Activated CD4-positive, alpha-beta T cell treated with anti-CD3 and anti-CD28 coated beads for 36 hours (primary cell): ENCODE measurements at regions of chr17 and their contacts with region 1.

Region 1: GRCh38 chr17:3893003-3893719 is at the start of gene CAMKK1:
- DNase-seq: peak; percentile 94
- ATAC-seq: peak; percentile 88
- H3K4me3 Mint-ChIP-seq: peak within 1 kb of the TSS; percentile 76
- H3K27ac Mint-ChIP-seq: peak within 1 kb of the TSS; percentile 77
- H3K4me1 Mint-ChIP-seq: peaks cover 36% of the 10 kb centered on the region
- H3K27me3 Mint-ChIP-seq: no peaks in the 10 kb centered on the region
- total RNA-seq, gene CAMKK1: 4.5 to 5.4 TPM

Region 2: GRCh38 chr17:3750926-3751325 is 142.2 kb before region 1 on chr17:
- CTCF ChIA-PET with region 1: no interaction called
- POLR2A ChIA-PET with region 1: no interaction called
- intact Hi-C with region 1: no loop called
- DNase-seq: peak; percentile 65
- ATAC-seq: peak; percentile 59
- H3K4me3 Mint-ChIP-seq: no peak overlapping the region
- H3K27ac Mint-ChIP-seq: peak overlapping the region; percentile 81
- H3K4me1 Mint-ChIP-seq: peaks cover 29% of the 10 kb centered on the region
- H3K27me3 Mint-ChIP-seq: no peaks in the 10 kb centered on the region

Region 3: GRCh38 chr17:3944485-3945388 is 51.6 kb after region 1 on chr17:
- CTCF ChIA-PET with region 1: no interaction called
- POLR2A ChIA-PET with region 1: no interaction called
- intact Hi-C with region 1: loop called in 1 of 2 experiments (anchors 1 kb)
- DNase-seq: peak; percentile 72
- ATAC-seq: peak; percentile 88
- H3K4me3 Mint-ChIP-seq: no peak overlapping the region
- H3K27ac Mint-ChIP-seq: no peak overlapping the region
- H3K4me1 Mint-ChIP-seq: no peaks in the 10 kb centered on the region
- H3K27me3 Mint-ChIP-seq: no peaks in the 10 kb centered on the region